H1 (cell line): ENCODE measurements at regions of chr16 and their contacts with region 1.

Region 1: DNA sequence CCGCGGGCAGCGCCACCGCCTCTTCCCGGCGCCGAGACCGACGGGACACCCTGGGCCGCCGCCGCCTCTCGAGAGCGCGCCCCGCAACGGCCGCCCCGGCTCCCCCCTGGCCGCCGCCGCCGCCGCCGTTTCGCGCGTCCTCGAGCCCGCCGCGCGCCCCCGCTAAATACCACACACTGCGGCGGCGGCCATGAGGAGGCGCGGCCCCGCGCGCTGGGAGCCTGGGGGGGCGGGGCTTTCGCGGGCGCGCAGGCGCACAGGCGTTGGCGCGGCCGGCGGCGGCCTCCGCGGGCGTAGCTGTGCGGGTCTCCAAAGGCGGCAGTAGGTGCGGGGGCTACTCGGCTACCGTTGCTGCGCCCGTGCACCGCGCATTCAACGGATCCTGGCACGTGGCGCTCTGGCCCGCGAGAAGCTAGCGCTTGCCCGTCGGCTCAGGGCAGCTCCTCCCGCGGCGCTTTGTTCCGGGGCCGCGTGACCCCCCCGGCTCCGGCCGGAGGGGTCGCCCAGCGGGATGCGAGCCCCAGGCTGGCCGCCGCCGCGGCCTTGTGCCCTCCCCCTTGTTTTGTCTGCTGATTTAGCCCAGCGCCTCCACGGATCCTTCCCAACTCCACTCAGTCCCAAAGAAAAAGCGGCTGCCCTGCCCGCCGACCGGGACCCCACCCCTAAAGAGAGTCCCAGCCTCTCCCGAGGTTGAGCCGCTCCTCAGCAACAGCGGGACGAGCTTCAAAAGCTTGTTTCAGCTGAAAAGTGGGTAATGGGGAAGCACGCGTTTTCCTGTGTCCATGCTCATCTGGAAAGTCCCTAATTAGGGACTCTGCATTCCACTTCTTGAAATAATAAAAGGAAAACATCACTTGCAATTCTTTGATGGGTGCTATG is at the start of gene SIAH1:
- DNase-seq: peak; percentile 50 to 93
- H3K4me3 ChIP-seq: peak within 1 kb of the TSS; percentile 80 to 96 (median 92)
- H3K27ac ChIP-seq: peak within 1 kb of the TSS; percentile 98
- H3K4me1 ChIP-seq: peaks cover 0 to 6% (median 3%) of the 10 kb centered on the region in 4 experiments; a peak in 3 of 7 replicates
- H3K27me3 ChIP-seq: no peaks in the 10 kb centered on the region
- CTCF ChIP-seq: no peak
- EP300 ChIP-seq: peak in 1 of 2 experiments; percentile 44; a peak in 1 of 3 replicates
- POLR2A ChIP-seq: peak; percentile 76 to 93
- RAD21 ChIP-seq: 0 out of 4 replicates have a peak, but pooled peaks of 1 of the 2 experiments have one; percentile 3
- total RNA-seq, gene SIAH1: 33.3 and 33.9 TPM in 2 replicates

Region 2: DNA sequence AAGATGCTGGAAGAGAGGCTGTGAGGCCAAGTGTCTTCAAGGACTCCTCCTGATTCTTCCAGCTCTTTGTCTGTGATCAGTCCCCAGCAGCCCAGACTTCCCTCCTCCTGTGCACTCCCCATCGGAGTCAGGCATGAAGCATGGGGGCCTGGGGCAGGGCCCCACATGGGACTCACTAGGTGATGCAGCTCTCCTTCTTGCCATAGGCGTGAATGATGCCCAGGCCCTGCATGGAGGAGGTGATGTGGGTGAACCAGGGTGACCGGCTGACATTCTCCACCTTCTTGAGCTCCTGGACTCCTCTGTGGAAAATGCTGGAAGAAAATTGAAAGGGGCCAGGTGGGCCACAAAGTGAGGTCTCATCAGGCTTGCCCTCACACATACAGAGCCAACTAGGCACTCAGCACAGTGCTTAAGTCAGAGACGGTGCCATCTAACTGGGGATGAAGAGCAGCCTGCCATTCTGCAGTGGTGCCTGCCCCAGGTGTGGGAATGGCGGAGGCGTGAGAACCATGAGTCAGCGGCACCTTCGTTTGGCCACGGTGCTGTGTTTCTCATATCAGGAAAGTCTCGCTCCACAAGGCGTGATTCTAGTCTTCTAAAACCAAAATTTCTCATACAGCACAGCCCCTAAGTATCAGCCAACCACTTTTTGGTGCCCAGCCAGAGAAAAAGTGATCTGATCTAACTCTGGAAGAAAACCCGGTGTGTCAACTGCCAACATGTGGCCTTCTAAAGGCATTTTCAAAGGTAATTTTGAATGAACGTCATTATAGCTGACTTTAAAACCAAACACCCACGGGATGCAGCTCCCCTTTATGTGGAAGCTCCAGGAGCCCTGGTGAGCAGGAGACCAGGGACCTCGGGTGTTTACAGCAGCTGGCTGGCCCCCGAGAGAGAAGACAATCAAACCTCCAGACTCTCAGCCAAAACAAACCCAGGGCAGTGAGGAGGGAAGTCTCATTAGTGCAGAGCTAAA is 284.5 kb before region 1 on chr16:
- CTCF ChIA-PET with region 1: no interaction called
- POLR2A ChIA-PET with region 1: no interaction called
- DNase-seq: no peak
- H3K4me3 ChIP-seq: no peak overlapping the region
- H3K27ac ChIP-seq: no peak overlapping the region
- H3K4me1 ChIP-seq: peaks cover 0 to 5% (median 1%) of the 10 kb centered on the region in 4 experiments; a peak in 1 of 7 replicates
- H3K27me3 ChIP-seq: no peaks in the 10 kb centered on the region; a peak in 1 of 7 replicates
- CTCF ChIP-seq: no peak
- EP300 ChIP-seq: no peak
- POLR2A ChIP-seq: no peak
- RAD21 ChIP-seq: no peak

Region 3: GRCh38 chr16:48353565-48354163 is 31.8 kb before region 1 on chr16:
- CTCF ChIA-PET with region 1: interaction called, 6 read pairs
- POLR2A ChIA-PET with region 1: interaction called, 30 read pairs
- DNase-seq: peak; percentile 51 to 63
- H3K4me3 ChIP-seq: no peak overlapping the region
- H3K27ac ChIP-seq: no peak overlapping the region
- H3K4me1 ChIP-seq: peaks cover 0 to 2% (median 0%) of the 10 kb centered on the region in 4 experiments; a peak in 1 of 7 replicates
- H3K27me3 ChIP-seq: no peaks in the 10 kb centered on the region
- CTCF ChIP-seq: peak; percentile 79 to 99 (median 96)
- EP300 ChIP-seq: no peak
- POLR2A ChIP-seq: peak in 1 of 2 experiments; percentile 22; a peak in 1 of 3 replicates
- RAD21 ChIP-seq: peak; percentile 78 to 84

Region 4: DNA sequence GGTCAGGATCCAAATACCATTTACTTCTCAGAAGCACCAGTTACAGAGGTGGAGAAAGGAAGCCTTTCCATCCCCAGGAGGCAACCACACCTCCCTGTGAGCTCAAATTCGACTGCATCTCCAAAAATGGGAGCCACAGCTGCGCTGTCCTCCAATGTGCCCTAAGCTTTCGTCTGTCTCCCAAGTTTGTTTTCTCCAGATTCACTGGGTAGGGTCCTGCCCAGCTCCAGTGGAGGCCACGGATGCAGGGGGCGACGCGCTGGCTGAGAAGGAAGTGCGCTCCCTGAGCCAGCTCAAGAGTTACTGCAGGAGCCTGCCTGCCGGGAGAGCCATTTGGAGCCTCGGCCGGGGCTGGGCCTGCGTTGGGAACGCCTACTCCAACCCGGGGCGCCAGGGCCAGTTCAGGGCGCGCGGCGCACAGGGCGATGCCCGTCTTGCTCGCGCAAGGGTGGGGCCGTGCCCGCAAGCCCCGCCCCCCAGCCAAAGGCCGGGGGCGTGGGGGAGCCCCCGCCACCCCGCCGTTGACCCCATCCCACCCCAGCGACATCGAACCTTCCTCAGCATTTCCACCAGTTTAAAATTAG is 19.8 kb before region 1 on chr16:
- CTCF ChIA-PET with region 1: interaction called, 3 read pairs
- POLR2A ChIA-PET with region 1: interaction called, 156 read pairs
- DNase-seq: peak; percentile 82 to 93
- H3K4me3 ChIP-seq: peak overlapping the region; percentile 60 to 87 (median 74)
- H3K27ac ChIP-seq: peak overlapping the region; percentile 54
- H3K4me1 ChIP-seq: peaks cover 2 to 11% (median 6%) of the 10 kb centered on the region in 4 experiments; a peak in 5 of 7 replicates
- H3K27me3 ChIP-seq: no peaks in the 10 kb centered on the region
- CTCF ChIP-seq: peak in 2 of 3 experiments; percentile 13 to 19; a peak in 2 of 4 replicates
- EP300 ChIP-seq: no peak
- POLR2A ChIP-seq: peak; percentile 88 to 92
- RAD21 ChIP-seq: no peak; a peak in 1 of 4 replicates

Region 5: DNA sequence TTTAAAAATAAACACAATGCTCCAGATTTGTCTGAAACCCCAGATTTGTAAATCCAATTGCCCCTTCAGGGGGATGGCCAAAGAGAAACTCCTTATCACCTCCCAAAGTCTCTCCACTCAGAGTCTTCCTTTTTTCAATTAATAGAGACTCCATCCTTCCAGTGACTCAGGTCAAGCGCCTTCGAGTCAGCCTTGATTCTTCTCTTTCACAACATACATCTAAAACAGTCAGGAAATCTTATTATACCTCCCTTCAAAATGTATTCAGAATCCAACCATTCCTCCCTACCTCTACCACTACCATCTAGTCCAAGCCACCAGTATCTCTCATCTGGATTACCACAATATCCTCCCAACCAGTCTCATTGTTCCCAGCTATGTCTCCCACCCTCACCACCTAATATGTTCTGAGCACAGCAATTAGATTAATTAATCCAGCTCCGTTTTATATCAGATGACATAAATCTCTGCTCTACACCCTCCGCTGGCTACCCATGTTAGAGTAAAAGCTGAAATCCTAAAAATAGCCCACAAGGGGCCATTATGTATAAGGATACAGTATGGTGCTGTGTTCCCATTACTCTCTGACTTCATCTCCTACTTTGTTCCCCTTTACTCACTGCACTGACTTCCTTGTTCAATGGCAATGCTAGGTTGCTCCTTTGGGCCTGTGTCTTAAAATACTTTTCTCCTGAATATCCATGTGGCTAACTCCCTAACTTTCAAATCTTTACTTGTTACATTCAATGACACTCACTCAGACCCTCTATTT is 12.1 kb before region 1 on chr16:
- CTCF ChIA-PET with region 1: interaction called, 4 read pairs
- POLR2A ChIA-PET with region 1: interaction called, 156 read pairs
- DNase-seq: no peak
- H3K4me3 ChIP-seq: no peak overlapping the region
- H3K27ac ChIP-seq: no peak overlapping the region
- H3K4me1 ChIP-seq: peaks cover 0 to 6% (median 4%) of the 10 kb centered on the region in 4 experiments; a peak in 4 of 7 replicates
- H3K27me3 ChIP-seq: no peaks in the 10 kb centered on the region
- CTCF ChIP-seq: no peak
- EP300 ChIP-seq: no peak
- POLR2A ChIP-seq: no peak
- RAD21 ChIP-seq: no peak

Region 6: GRCh38 chr16:48398752-48399151 is 13.2 kb after region 1 on chr16:
- CTCF ChIA-PET with region 1: no interaction called
- POLR2A ChIA-PET with region 1: interaction called, 25 read pairs
- DNase-seq: no peak
- H3K4me3 ChIP-seq: no peak overlapping the region
- H3K27ac ChIP-seq: no peak overlapping the region
- H3K4me1 ChIP-seq: no peaks in the 10 kb centered on the region
- H3K27me3 ChIP-seq: no peaks in the 10 kb centered on the region
- CTCF ChIP-seq: no peak
- EP300 ChIP-seq: no peak
- POLR2A ChIP-seq: no peak
- RAD21 ChIP-seq: no peak

Region 7: GRCh38 chr16:48409839-48410611 is 24.5 kb after region 1 on chr16:
- CTCF ChIA-PET with region 1: no interaction called
- POLR2A ChIA-PET with region 1: interaction called, 29 read pairs
- DNase-seq: no peak
- H3K4me3 ChIP-seq: no peak overlapping the region
- H3K27ac ChIP-seq: no peak overlapping the region
- H3K4me1 ChIP-seq: peaks cover 0 to 5% (median 3%) of the 10 kb centered on the region in 4 experiments; a peak in 3 of 7 replicates
- H3K27me3 ChIP-seq: no peaks in the 10 kb centered on the region
- CTCF ChIP-seq: no peak
- EP300 ChIP-seq: no peak
- POLR2A ChIP-seq: no peak
- RAD21 ChIP-seq: no peak